ENCODE measurements at regions of chr14 and their contacts with region 1.

Region 1: GRCh38 chr14:73644531-73645247 is at the start of gene DNAL1:
- DNase-seq: no peak
- H3K4me3 ChIP-seq: peak within 1 kb of the TSS; percentile 76 to 86
- H3K27ac ChIP-seq: peak within 1 kb of the TSS; percentile 80
- H3K4me1 ChIP-seq: peaks cover 20% of the 10 kb centered on the region
- H3K27me3 ChIP-seq: no peaks in the 10 kb centered on the region
- CTCF ChIP-seq: no peak
- POLR2A ChIP-seq: peak in 1 of 2 donors; percentile 31
- total RNA-seq, gene DNAL1: 4.7 TPM

Region 2: DNA sequence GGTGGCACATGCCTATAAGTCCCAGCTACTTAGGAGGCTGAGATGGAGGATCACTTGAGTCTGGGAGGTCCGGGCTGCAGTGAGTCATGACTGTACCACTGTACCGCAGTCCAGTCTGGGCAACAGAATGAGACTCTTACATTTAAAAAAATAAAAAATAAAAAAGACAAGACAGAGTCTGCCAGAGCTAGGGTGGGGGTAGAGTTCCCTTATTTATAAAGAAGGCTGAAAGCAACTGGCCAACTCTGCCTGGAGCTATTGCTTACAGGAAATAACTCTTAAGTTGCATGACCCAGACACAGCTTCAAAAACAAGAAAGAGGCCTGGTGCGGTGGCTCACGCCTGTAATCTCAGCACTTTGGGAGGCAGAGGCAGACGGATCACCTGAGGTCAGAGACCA is 217.8 kb before region 1 on chr14:
- intact Hi-C with region 1: no loop called
- DNase-seq: no peak
- H3K4me3 ChIP-seq: no peak overlapping the region
- H3K27ac ChIP-seq: no peak overlapping the region
- H3K4me1 ChIP-seq: peaks cover 33% of the 10 kb centered on the region
- H3K27me3 ChIP-seq: no peaks in the 10 kb centered on the region
- CTCF ChIP-seq: no peak
- POLR2A ChIP-seq: no peak

Region 3: DNA sequence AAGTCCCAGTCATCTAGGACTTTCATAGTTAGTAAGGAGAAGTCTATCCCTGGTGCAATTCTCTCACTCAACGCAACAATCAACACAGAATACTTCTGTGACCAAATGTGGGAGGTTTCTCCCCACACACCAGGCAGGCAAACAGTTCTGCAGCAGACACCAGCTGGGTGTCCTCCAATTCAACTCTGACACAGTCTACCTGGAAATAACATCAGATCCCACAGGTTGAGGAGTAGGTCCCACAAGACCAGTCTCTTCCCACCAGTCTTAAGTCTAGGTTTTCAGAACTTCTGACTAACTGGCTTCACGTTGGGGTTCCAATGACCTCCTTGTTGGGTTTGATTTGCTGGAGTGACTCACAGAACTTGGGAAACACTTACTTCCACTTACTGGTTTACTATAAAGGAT is 17.5 kb before region 1 on chr14:
- intact Hi-C with region 1: no loop called
- DNase-seq: no peak
- H3K4me3 ChIP-seq: no peak overlapping the region
- H3K27ac ChIP-seq: no peak overlapping the region
- H3K4me1 ChIP-seq: no peaks in the 10 kb centered on the region
- H3K27me3 ChIP-seq: no peaks in the 10 kb centered on the region
- CTCF ChIP-seq: no peak
- POLR2A ChIP-seq: no peak

Region 4: DNA sequence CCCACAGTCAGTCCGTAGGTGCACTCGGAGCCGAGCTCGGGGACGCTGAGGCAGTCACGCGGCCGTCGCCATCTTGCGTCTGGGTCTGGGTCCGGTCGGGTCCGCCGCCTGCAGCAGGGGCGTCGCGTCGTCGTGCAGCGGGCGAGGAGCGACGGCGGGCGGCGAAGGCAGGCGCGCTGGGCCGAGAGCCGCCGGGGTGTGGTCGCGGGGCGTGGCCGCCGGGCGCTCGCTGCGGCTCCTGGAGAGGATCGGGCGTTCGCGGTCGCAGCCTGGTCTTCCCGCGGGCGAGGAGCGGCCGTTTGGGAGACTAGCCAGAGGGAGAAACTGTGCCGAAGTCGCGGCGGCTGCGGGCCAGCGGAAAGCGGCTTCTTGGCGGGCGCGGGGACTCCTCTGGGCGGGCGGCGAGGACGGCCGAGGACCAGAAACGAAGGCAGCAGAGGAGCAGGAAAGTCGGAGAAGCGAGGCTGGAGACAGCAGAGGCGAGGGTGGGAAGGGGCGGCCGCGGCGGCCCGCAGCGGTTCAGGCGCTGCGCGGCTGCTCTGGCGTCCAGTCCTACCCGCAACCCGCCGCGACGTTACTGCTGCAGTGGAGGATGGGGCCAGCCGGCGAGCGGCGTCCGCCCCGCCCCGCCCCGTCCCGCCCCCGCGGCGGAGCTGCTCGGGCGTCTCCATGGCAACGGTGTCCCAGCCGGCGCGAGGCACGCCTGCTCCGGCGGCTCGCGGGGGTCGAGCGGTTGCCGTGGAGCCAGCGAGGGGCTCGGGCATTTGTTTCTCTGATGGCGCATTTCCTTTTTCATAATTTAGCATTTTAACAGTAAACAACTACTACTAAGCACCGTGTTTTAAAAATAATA is 69.3 kb after region 1 on chr14 and contains the start of gene PNMA1:
- intact Hi-C with region 1: loop called (anchors 10 kb)
- DNase-seq: no peak
- H3K4me3 ChIP-seq: peak within 1 kb of the TSS; percentile 71 to 72
- H3K27ac ChIP-seq: peak within 1 kb of the TSS; percentile 85
- H3K4me1 ChIP-seq: peaks cover 49% of the 10 kb centered on the region
- H3K27me3 ChIP-seq: no peaks in the 10 kb centered on the region
- CTCF ChIP-seq: no peak
- POLR2A ChIP-seq: peak in 1 of 2 donors; percentile 75
- total RNA-seq, gene PNMA1: 35.4 TPM

Measured in vagina (tissue), 2 donors.